ENCODE measurements at regions of chr10 and their contacts with region 1.

Region 1: DNA sequence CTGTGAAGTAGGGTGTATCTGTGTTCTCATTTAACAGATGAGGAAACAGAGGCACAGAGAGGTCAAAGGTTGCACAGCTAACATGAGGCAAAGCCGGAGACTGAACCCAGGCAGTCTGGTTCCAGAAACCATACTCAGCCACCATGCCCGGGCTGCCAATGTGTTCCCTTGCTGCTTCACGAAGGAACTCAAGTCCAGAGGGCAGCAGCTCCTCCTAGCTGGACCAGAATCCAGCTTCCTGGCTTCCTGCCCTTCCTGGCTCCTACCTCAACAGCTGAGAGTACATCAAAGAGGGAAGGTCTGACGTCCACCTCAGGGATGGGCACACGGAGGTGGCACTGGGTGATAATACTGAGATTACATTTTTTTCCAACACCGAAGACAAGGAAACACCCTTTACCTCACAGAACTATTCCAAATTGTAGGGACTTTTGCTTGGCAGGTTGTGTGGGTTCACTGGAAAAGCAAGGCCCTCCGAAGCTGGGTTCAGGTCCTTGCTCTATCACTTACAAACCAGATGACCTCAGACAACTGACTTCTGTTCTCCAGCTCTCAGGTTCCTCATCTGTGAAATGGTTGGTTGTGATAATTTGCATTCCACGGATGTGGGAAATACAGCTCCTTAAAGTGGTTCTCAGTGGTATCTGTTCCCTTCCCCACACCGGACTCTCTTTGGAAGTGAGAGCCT is 154.1 kb upstream of the ZMIZ1 start:
- DNase-seq: peak in 1 of 2 donors; percentile 80
- ATAC-seq: peak in 3 of 4 donors; percentile 78 to 87 (median 83)
- H3K4me3 ChIP-seq: no peak overlapping the region
- H3K27ac ChIP-seq: no peak overlapping the region
- H3K4me1 ChIP-seq: peaks cover 5% of the 10 kb centered on the region
- H3K27me3 ChIP-seq: no peaks in the 10 kb centered on the region
- CTCF ChIP-seq: no peak

Region 2: DNA sequence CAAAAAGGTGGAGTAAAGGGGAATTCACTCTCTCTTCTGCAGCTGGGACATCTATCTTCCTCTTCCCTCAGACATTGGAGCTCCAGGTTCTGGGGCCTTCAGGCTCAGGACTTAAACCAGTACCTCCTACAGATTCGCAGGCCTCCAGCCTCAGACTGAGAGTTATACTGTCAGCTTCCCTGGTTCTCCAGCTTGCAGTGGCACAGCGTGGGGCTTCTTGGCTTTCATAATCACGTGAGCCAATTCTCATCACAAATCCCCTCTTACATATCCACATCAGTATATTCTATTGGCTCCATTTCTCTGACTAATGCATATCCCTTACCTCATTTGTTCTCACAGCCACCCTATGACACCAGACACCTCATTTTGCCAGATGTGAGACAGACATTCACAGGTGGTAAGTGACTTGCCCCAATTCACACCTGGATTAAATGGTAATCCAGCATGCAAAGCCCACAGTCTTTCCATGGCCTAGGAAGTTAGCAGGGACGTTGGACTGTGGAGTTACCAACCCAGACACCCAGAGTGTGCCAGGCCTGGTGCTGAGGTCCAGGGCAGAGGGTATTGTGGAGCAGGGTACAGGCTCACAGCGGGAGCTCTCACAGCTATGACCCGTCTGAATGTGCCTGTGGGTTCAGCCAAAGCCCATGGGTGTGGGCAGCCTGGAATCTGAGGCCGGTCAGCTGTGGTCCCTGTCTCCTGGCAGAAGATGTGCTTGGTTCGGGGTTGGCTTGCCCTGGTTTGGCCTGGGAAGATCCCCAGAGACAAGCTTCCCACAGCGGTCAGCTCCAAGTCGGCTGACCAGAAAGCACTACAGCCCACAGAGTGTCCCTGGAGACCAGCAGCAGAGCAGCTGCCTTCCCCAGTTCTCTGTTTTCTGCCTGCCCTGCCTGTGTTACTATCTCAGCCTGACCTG is 549.2 kb after region 1 on chr10:
- intact Hi-C with region 1: loop called in 1 of 2 experiments (anchors 5 kb)
- DNase-seq: peak; percentile 60 to 84
- ATAC-seq: peak; percentile 66 to 87 (median 76)
- H3K4me3 ChIP-seq: no peak overlapping the region
- H3K27ac ChIP-seq: peak overlapping the region; percentile 71
- H3K4me1 ChIP-seq: peaks cover 17% of the 10 kb centered on the region
- H3K27me3 ChIP-seq: no peaks in the 10 kb centered on the region
- CTCF ChIP-seq: no peak